ENCODE measurements at regions of chr14 and their contacts with region 1.

Region 1: GRCh38 chr14:59918824-59919569 is 947 bp upstream of the LRRC9 start:
- DNase-seq: peak; percentile 16
- ATAC-seq: no peak; the same call in 1 of the 2 replicates
- H3K4me3 ChIP-seq: no peak overlapping the region
- H3K27ac ChIP-seq: no peak overlapping the region
- H3K4me1 ChIP-seq: no peaks in the 10 kb centered on the region
- H3K27me3 ChIP-seq: no peaks in the 10 kb centered on the region
- CTCF ChIP-seq: peak; percentile 34 to 55 (median 37); a peak in 4 of 6 replicates
- POLR2A ChIP-seq: no peak
- RAD21 ChIP-seq: peak; percentile 45

Region 2: DNA sequence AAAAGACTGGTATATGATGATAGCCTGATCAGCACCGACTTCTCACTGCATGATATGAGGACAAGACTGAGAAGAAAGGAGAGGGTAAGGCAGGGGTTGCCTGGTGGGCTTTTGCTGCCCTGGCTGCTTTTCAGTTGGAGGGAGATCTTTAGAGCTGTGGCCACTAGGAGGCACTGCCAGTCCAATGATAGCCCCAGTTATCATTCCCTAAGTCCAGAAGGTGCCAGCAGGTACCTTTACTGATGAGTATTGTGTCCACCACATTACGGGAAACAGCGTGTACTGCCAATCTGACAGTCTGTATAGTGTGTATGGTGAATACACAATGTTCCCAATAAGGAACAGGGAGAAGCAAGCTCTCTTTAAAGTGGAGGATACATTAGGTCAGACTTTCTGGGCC is 286.6 kb before region 1 on chr14:
- CTCF ChIA-PET with region 1: interaction called, 16 read pairs
- POLR2A ChIA-PET with region 1: no interaction called
- RAD21 ChIA-PET with region 1: no interaction called
- intact Hi-C with region 1: loop called (anchors 1 kb)
- DNase-seq: peak; percentile 33
- ATAC-seq: peak; percentile 80
- H3K4me3 ChIP-seq: no peak overlapping the region
- H3K27ac ChIP-seq: no peak overlapping the region
- H3K4me1 ChIP-seq: no peaks in the 10 kb centered on the region
- H3K27me3 ChIP-seq: no peaks in the 10 kb centered on the region
- CTCF ChIP-seq: peak; percentile 69 to 75 (median 71)
- POLR2A ChIP-seq: no peak
- RAD21 ChIP-seq: peak; percentile 70

Measured in HCT116 (cell line).